Panc1 (cell line): ENCODE measurements at regions of chr2 and their contacts with region 1.

Region 1: GRCh38 chr2:96773922-96774321 is 13.2 kb downstream of the CNNM4 start:
- DNase-seq: no peak
- ATAC-seq: peak; percentile 40; the same call in 1 of the 2 replicates
- H3K4me3 ChIP-seq: peak overlapping the region; percentile 22 to 51
- H3K27ac ChIP-seq: peak overlapping the region; percentile 74
- H3K4me1 ChIP-seq: peaks cover 31% of the 10 kb centered on the region
- H3K27me3 ChIP-seq: no peaks in the 10 kb centered on the region
- CTCF ChIP-seq: no peak

Region 2: GRCh38 chr2:96739633-96740428 is 34.1 kb before region 1 on chr2 and contains the start of gene LMAN2L:
- CTCF ChIA-PET with region 1: interaction called, 14 read pairs
- POLR2A ChIA-PET with region 1: no interaction called
- in situ Hi-C with region 1: no loop called
- intact Hi-C with region 1: no loop called
- DNase-seq: peak; percentile 88
- ATAC-seq: peak; percentile 100
- H3K4me3 ChIP-seq: peak within 1 kb of the TSS; percentile 82 to 83
- H3K27ac ChIP-seq: peak within 1 kb of the TSS; percentile 90
- H3K4me1 ChIP-seq: peaks cover 6% of the 10 kb centered on the region; the same call in 1 of the 2 replicates
- H3K27me3 ChIP-seq: no peaks in the 10 kb centered on the region
- CTCF ChIP-seq: no peak
- total RNA-seq, gene LMAN2L: 31.5 TPM